GM10248 (cell line): ENCODE measurements at regions of chr11 and their contacts with region 1.

Region 1: GRCh38 chr11:102390667-102391465 is 43.9 kb downstream of the BIRC2 start:
- DNase-seq: peak; percentile 63
- CTCF ChIP-seq: peak; percentile 92

Region 2: DNA sequence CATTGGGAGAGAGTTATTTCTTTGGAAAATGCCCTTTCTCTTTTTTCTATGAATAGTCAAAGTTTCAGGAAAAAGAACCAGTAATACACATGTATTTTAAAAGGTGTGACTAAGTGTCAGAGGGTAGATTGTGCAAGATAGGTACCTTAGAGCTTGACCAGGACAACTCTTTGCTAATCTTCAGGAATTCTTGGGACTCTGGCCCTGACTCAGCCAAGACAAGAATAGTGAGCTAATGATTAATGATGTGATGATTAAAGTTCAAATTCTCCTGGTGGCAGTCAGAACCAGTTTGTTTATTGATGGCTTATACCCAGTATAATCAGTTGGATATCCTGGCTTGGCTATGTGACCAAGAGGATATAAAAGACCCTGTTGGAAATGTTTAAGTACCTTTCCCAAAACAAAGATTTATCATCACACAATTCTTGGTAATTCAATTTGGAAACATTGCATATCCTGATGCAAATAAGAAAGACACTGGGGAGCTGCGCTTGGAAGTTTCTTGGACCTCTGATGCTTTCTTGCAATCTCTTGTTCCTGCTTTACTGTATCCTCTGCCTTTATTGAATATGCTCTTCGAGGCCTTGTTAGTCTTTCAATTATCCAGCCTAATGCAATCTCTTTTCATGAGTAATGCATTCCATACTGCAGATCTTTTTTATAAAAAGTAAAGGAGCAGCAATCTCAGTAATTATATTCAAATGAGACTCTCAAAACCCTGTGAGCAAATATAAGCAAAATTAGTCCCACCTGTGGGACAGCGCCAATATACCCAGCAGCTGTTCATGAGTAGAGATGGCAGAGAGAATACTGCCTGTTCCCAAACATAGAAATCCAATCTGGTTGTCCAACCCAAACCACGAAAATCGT is 524.0 kb before region 1 on chr11:
- CTCF ChIA-PET with region 1: no interaction called
- POLR2A ChIA-PET with region 1: no interaction called
- DNase-seq: no peak
- CTCF ChIP-seq: no peak

Region 3: DNA sequence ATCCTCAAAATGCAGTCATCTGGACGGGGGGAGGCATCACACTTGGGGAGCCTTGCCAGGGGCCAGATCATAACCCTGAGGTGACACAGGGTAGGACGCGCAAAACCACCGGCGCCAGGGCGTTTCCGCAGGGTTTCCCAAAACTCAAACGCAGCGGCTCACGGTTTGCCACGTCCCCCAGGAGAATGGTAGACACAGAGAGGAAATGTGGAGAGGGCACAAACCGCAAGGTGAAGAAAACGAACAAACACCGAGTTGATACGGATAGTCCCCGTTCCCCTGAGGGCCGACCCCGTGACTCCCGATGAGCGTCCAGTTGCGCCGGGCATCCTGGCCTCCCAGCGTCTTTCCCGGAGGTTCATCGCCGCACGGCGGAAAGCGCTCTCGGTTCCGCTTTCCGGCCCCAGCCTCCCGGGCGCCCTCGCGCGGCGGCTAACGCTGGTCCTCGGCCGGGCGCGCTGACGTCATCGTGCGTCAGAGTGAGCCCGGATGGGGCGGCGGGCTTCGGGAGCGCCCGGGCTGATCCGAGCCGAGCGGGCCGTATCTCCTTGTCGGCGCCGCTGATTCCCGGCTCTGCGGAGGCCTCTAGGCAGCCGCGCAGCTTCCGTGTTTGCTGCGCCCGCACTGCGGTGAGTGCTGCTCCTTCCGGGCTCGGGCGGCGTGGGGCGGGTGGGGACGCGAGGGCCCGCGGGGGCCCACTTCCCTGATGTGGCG is 44.0 kb before region 1 on chr11 and contains the start of gene BIRC2:
- CTCF ChIA-PET with region 1: interaction called, 17 read pairs
- POLR2A ChIA-PET with region 1: no interaction called
- DNase-seq: peak; percentile 90
- CTCF ChIP-seq: peak; percentile 90

Region 4: GRCh38 chr11:102410382-102410784 is 19.5 kb after region 1 on chr11:
- CTCF ChIA-PET with region 1: interaction called, 168 read pairs
- POLR2A ChIA-PET with region 1: interaction called, 5 read pairs
- DNase-seq: no peak
- CTCF ChIP-seq: no peak

Region 5: GRCh38 chr11:102438311-102439062 is 47.6 kb after region 1 on chr11:
- CTCF ChIA-PET with region 1: interaction called, 14 read pairs
- POLR2A ChIA-PET with region 1: no interaction called
- DNase-seq: no peak
- CTCF ChIP-seq: no peak

Region 6: GRCh38 chr11:102488208-102488607 is 97.3 kb after region 1 on chr11:
- CTCF ChIA-PET with region 1: interaction called, 12 read pairs
- POLR2A ChIA-PET with region 1: no interaction called
- DNase-seq: peak; percentile 20
- CTCF ChIP-seq: no peak